K562 (cell line): ENCODE measurements at regions of chr1 and their contacts with region 1.

Region 1: GRCh38 chr1:117644696-117645311 is 39.0 kb downstream of the TENT5C start:
- DNase-seq: peak; percentile 86 to 92 (median 88)
- ATAC-seq: peak; percentile 94
- H3K4me3 ChIP-seq: no peak overlapping the region
- H3K27ac ChIP-seq: peak overlapping the region; percentile 24; the same call in 1 of the 3 replicates
- H3K4me1 ChIP-seq: peaks cover 32 to 39% of the 10 kb centered on the region in 2 experiments
- H3K27me3 ChIP-seq: no peaks in the 10 kb centered on the region
- CTCF ChIP-seq: peak in 2 of 3 experiments; percentile 11 to 23; a peak in 3 of 6 replicates
- EP300 ChIP-seq: peak; percentile 86
- POLR2A ChIP-seq: no peak
- RAD21 ChIP-seq: peak in 1 of 2 experiments; percentile 44; a peak in 2 of 4 replicates

Region 2: DNA sequence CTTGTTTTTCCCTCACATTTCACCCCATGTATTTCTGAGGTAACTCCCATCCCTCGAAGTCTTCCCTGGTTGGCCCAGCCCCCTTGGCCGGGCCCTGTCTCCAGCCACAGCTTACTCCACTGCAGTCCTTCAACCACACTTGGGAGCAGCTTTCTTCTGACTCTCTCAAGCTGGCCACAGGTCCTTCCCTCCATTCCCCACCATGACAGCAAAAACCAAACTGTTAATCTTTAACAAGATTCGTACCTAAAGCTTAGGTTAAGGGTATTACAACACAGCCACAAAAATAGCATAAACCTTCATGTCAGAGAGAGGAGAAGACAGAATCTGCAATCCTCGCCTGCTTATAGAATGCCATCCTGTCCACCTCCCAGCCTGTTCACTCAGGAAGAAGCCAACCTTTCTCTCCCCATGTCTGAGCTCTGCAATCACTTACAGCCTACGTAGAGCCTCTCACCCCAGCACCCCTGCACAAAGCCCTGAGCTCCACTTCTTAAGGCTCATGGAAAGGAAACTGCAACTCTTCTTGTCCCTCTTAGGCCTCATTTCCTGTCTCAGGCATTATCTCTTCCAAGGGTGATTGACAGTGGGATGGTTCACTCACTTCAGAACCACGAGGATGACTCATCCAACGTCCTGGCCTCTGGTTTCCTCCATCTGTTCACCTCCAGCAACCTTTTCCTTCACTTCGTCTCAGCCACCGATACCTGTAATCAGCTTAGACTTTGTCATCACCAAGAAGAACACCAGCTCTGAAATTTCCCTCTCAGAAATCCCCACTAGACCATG is 817.8 kb before region 1 on chr1:
- CTCF ChIA-PET with region 1: no interaction called
- POLR2A ChIA-PET with region 1: no interaction called
- in situ Hi-C with region 1: no loop called
- intact Hi-C with region 1: no loop called
- DNase-seq: peak; percentile 79 to 97 (median 86)
- ATAC-seq: peak; percentile 81
- H3K4me3 ChIP-seq: peak overlapping the region; percentile 26
- H3K27ac ChIP-seq: peak overlapping the region; percentile 94
- H3K4me1 ChIP-seq: peaks cover 24 to 54% of the 10 kb centered on the region in 2 experiments
- H3K27me3 ChIP-seq: no peaks in the 10 kb centered on the region
- CTCF ChIP-seq: no peak
- EP300 ChIP-seq: peak; percentile 94
- POLR2A ChIP-seq: peak; percentile 85
- RAD21 ChIP-seq: no peak; a peak in 1 of 4 replicates

Region 3: GRCh38 chr1:117359561-117360289 is 285.1 kb before region 1 on chr1:
- CTCF ChIA-PET with region 1: no interaction called
- POLR2A ChIA-PET with region 1: no interaction called
- in situ Hi-C with region 1: no loop called
- intact Hi-C with region 1: no loop called
- DNase-seq: no peak
- ATAC-seq: no peak
- H3K4me3 ChIP-seq: no peak overlapping the region
- H3K27ac ChIP-seq: no peak overlapping the region
- H3K4me1 ChIP-seq: peaks cover 4 to 11% of the 10 kb centered on the region in 2 experiments; a peak in 4 of 5 replicates
- H3K27me3 ChIP-seq: no peaks in the 10 kb centered on the region
- CTCF ChIP-seq: no peak
- EP300 ChIP-seq: no peak
- POLR2A ChIP-seq: no peak
- RAD21 ChIP-seq: no peak

Region 4: GRCh38 chr1:117622726-117623125 is 22.1 kb before region 1 on chr1:
- CTCF ChIA-PET with region 1: no interaction called
- POLR2A ChIA-PET with region 1: interaction called, 55 read pairs
- in situ Hi-C with region 1: no loop called
- intact Hi-C with region 1: no loop called
- DNase-seq: no peak
- ATAC-seq: peak; percentile 36
- H3K4me3 ChIP-seq: no peak overlapping the region
- H3K27ac ChIP-seq: no peak overlapping the region
- H3K4me1 ChIP-seq: peaks cover 0 to 16% of the 10 kb centered on the region in 2 experiments; a peak in 4 of 5 replicates
- H3K27me3 ChIP-seq: no peaks in the 10 kb centered on the region
- CTCF ChIP-seq: peak in 1 of 3 experiments; percentile 18; a peak in 1 of 6 replicates
- EP300 ChIP-seq: no peak
- POLR2A ChIP-seq: no peak
- RAD21 ChIP-seq: peak in 1 of 2 experiments; percentile 27; a peak in 1 of 4 replicates

Region 5: GRCh38 chr1:117664314-117664713 is 19.5 kb after region 1 on chr1:
- CTCF ChIA-PET with region 1: no interaction called
- POLR2A ChIA-PET with region 1: interaction called, 5 read pairs
- in situ Hi-C with region 1: no loop called
- intact Hi-C with region 1: loop called (anchors 1 kb)
- DNase-seq: peak; percentile 43 to 73 (median 56)
- ATAC-seq: peak; percentile 9; the same call in 2 of the 3 replicates
- H3K4me3 ChIP-seq: no peak overlapping the region
- H3K27ac ChIP-seq: no peak overlapping the region
- H3K4me1 ChIP-seq: peaks cover 18 to 42% of the 10 kb centered on the region in 2 experiments
- H3K27me3 ChIP-seq: no peaks in the 10 kb centered on the region
- CTCF ChIP-seq: no peak
- EP300 ChIP-seq: peak; percentile 37; the same call in 1 of the 2 replicates
- POLR2A ChIP-seq: no peak
- RAD21 ChIP-seq: no peak; a peak in 1 of 4 replicates

Region 6: GRCh38 chr1:117846674-117847425 is 202.0 kb after region 1 on chr1:
- CTCF ChIA-PET with region 1: no interaction called
- POLR2A ChIA-PET with region 1: no interaction called
- in situ Hi-C with region 1: no loop called
- intact Hi-C with region 1: no loop called
- DNase-seq: no peak
- ATAC-seq: no peak
- H3K4me3 ChIP-seq: no peak overlapping the region
- H3K27ac ChIP-seq: no peak overlapping the region
- H3K4me1 ChIP-seq: no peaks in the 10 kb centered on the region; a peak in 1 of 5 replicates
- H3K27me3 ChIP-seq: no peaks in the 10 kb centered on the region
- CTCF ChIP-seq: no peak
- EP300 ChIP-seq: no peak
- POLR2A ChIP-seq: no peak
- RAD21 ChIP-seq: no peak